AG04450 (cell line): ENCODE measurements at regions of chr17 and their contacts with region 1.

Region 1: DNA sequence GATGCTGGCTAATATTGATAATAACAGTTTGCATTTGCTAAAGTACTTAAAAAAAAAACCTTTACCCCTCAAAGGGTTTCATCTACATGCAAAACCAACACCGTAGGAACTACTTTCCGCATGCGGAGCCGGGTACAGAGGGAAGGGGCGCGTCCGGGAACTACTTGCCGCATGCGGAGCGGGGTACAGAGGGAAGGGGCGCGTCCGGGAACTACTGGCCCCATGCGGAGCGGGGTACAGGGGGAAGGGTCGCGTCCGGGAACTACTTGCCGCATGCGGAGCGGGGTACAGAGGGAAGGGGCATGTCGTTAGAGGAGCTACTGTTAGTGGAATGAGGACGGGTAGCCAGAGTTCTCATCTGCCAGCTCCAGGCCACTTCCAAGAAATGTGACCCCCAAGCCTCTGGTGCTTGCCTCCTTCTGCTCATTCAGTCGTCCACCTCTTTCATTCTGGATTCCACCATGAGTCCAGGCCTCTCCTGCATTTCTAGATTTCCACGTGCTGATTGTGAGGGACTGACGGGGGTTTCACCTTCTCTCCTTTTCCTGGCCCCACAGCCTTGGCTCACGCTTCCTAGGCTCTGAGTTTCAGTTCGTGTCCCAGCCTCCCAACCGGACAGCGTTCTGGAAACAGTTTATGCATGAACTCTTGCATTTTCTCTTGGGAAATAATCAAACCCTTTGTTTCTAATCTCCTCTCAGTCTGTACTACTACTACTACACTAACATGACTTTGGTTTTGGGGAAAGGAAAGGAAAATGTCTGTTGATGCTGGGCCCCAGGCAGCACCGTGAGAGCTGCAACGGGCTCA is 26.9 kb downstream of the MINK1 start:
- DNase-seq: no peak
- H3K4me3 ChIP-seq: no peak overlapping the region
- H3K27ac ChIP-seq: no peak overlapping the region
- H3K27me3 ChIP-seq: no peaks in the 10 kb centered on the region
- CTCF ChIP-seq: no peak

Region 2: DNA sequence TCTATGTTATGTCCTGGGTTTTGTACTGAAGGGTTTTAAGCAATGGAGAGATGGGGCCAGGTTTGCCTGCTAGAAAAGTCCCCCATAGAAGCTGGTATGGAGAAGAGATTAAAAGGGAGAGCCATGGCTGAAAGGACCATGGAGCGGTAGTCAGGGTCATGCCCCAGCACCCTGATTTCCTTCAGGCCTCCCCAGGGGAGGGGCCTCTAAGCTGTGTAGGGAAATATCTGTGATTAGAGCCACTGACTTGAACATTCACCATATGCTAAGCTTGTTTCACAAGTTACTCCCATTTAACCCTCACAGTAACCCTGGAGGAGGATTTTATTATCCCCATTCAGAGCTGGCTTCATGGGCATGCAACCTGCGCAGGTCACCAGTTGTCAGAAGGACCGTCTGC is 892.0 kb before region 1 on chr17:
- CTCF ChIA-PET with region 1: no interaction called
- POLR2A ChIA-PET with region 1: interaction called, 10 read pairs
- DNase-seq: no peak
- H3K4me3 ChIP-seq: no peak overlapping the region
- H3K27ac ChIP-seq: no peak overlapping the region
- H3K27me3 ChIP-seq: peaks cover 45% of the 10 kb centered on the region
- CTCF ChIP-seq: no peak

Region 3: GRCh38 chr17:4739122-4740024 is 120.6 kb before region 1 on chr17 and contains the starts of genes CXCL16 and ZMYND15:
- CTCF ChIA-PET with region 1: no interaction called
- POLR2A ChIA-PET with region 1: no interaction called
- DNase-seq: no peak
- H3K4me3 ChIP-seq: peak within 1 kb of the TSS; percentile 70
- H3K27ac ChIP-seq: no peak within 1 kb of the TSS
- H3K27me3 ChIP-seq: peaks cover 51% of the 10 kb centered on the region
- CTCF ChIP-seq: no peak
- polyA plus RNA-seq, gene CXCL16: 2.3 and 2.4 TPM in 2 replicates
- polyA plus RNA-seq, gene ZMYND15: 0.14 and 0.17 TPM in 2 replicates

Region 4: GRCh38 chr17:4920351-4921048 is 60.5 kb after region 1 on chr17:
- CTCF ChIA-PET with region 1: no interaction called
- POLR2A ChIA-PET with region 1: no interaction called
- DNase-seq: no peak
- H3K4me3 ChIP-seq: no peak overlapping the region
- H3K27ac ChIP-seq: no peak overlapping the region
- H3K27me3 ChIP-seq: no peaks in the 10 kb centered on the region
- CTCF ChIP-seq: no peak